ENCODE measurements at regions of chr11 and their contacts with region 1.

Region 1: DNA sequence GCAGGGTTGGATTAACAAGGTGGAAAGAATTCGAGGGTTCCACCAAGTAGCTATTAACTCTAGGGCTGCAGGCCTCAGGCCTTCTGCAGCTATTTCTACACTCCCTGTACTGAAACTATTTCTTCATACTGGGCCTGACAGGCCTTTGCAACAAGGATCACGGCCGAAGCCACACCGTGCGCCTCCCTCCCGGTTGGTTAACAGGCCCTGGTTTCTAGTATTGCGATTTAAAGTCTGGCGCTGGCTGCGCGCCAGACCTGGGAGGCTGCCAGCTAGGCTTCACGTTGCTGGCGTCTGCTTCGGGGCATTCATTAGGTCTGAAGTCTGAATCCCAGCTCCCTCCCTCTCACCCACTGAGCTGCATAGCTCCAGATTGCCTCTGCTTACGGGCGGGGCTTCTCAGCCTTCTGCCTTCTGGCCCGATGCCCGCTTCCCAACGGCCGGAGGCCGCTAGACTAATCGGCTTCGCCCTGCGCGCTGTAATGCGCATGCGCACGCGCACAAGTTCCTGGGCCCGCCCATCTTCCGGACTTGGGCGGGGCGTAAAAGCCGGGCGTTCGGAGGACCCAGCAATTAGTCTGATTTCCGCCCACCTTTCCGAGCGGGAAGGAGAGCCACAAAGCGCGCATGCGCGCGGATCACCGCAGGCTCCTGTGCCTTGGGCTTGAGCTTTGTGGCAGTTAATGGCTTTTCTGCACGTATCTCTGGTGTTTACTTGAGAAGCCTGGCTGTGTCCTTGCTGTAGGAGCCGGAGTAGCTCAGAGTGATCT is 1.6 kb downstream of the LDHA start:
- DNase-seq: peak; percentile 98 to 99 (median 99)
- ATAC-seq: peak; percentile 87
- H3K4me3 ChIP-seq: peak overlapping the region; percentile 83
- H3K4me1 ChIP-seq: peaks cover 7% of the 10 kb centered on the region
- CTCF ChIP-seq: no peak

Region 2: GRCh38 chr11:18280438-18281045 is 115.4 kb before region 1 on chr11:
- intact Hi-C with region 1: no loop called
- DNase-seq: no peak
- ATAC-seq: peak; percentile 31
- H3K4me3 ChIP-seq: no peak overlapping the region
- H3K4me1 ChIP-seq: no peaks in the 10 kb centered on the region
- CTCF ChIP-seq: no peak

Region 3: GRCh38 chr11:18321980-18322711 is 73.8 kb before region 1 on chr11 and contains the starts of genes GTF2H1 and HPS5:
- intact Hi-C with region 1: loop called in 1 of 2 experiments (anchors 5 kb)
- DNase-seq: peak; percentile 95 to 98 (median 97)
- ATAC-seq: peak; percentile 98
- H3K4me3 ChIP-seq: peak within 1 kb of the TSS; percentile 71
- H3K4me1 ChIP-seq: peaks cover 32% of the 10 kb centered on the region
- CTCF ChIP-seq: no peak
- total RNA-seq, gene GTF2H1: 32.8 to 43.3 (median 35.9) TPM
- total RNA-seq, gene HPS5: 9.8 to 16.6 (median 14.1) TPM

Region 4: DNA sequence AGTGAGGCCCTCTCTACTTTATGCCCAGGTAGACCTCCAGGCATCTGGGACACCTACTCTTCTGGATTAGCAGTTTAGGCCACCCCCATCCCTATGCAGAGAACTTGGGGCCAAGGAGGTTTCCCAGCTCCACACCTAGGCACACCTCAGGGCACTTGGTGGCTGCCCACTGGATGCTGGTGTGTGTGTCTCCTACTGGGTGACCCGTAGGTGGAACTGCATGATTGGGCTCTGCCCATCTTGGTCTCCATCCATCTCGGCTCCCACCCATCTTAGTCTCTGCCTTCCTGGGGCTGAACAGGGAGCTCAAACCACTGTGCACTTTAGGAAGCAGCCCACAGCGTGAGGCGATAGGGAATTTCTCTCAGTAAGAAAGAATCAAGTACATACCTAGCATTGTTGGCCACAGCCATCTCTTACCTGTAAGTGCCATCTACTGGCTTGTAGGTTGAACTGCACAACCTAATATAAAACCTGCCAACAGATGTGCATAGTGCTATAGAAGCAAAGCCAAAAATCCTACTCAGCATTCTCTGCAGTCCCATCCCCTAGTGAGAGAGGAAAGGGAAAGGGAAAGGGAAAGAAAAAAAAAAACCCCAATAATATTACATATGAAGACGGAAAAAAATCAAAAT is 457.3 kb after region 1 on chr11:
- intact Hi-C with region 1: no loop called
- DNase-seq: peak in 1 of 3 donors; percentile 3
- ATAC-seq: peak; percentile 58
- H3K4me3 ChIP-seq: no peak overlapping the region
- H3K4me1 ChIP-seq: no peaks in the 10 kb centered on the region
- CTCF ChIP-seq: no peak

Measured in mucosa of descending colon (tissue), 3 donors.